ENCODE measurements at regions of chr2 and their contacts with region 1.

Region 1: GRCh38 chr2:134679745-134680144 is 39.1 kb downstream of the TMEM163 start:
- DNase-seq: peak; percentile 58 to 75 (median 60)
- H3K4me3 ChIP-seq: no peak overlapping the region
- H3K4me3 Mint-ChIP-seq: peak overlapping the region; percentile 5 to 83 (median 68)
- H3K27ac ChIP-seq: no peak overlapping the region
- H3K27ac Mint-ChIP-seq: peak overlapping the region; percentile 10 to 71 (median 63)
- H3K4me1 ChIP-seq: peaks cover 52% of the 10 kb centered on the region
- H3K4me1 Mint-ChIP-seq: peaks cover 39 to 69% (median 52%) of the 10 kb centered on the region in 4 donors
- H3K27me3 ChIP-seq: no peaks in the 10 kb centered on the region
- H3K27me3 Mint-ChIP-seq: no peaks in the 10 kb centered on the region

Region 2: DNA sequence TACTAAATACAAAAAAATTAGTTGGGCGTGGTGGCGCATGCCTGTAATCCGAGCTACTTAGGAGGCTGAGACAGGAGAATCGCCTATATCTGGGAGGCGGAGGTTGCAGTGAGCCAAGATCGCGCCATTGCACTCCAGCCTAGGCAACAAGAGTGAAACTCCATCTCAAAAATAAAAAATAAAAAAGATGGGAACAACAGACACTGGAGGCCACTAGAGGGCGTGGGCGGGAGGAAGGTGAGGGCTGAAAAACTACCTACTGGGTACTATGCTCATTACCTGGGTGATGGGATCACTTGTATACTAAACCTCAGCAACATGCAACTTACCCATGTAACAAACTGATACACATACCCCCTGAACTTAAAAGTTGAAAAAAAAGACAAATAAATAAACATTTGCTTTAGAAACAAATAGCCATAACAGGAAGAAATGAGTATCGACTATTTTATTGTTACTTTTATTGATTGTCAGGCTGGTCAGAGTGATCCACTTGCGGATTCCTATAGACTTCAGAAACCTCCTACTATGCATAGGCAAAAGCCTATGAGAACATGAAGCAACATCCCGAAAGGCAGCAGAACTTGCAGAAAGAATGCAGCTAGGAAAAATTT is 22.0 kb before region 1 on chr2:
- CTCF ChIA-PET with region 1: interaction called, 10 read pairs
- POLR2A ChIA-PET with region 1: no interaction called
- intact Hi-C with region 1: no loop called
- DNase-seq: peak in 4 of 5 donors; percentile 30 to 46 (median 44)
- H3K4me3 ChIP-seq: no peak overlapping the region
- H3K4me3 Mint-ChIP-seq: no peak overlapping the region
- H3K27ac ChIP-seq: no peak overlapping the region
- H3K27ac Mint-ChIP-seq: peak overlapping the region in 1 of 7 donors; percentile 37
- H3K4me1 ChIP-seq: no peaks in the 10 kb centered on the region
- H3K4me1 Mint-ChIP-seq: peaks cover 16 to 34% (median 19%) of the 10 kb centered on the region in 4 donors
- H3K27me3 ChIP-seq: no peaks in the 10 kb centered on the region
- H3K27me3 Mint-ChIP-seq: peaks cover 2 to 3% of the 10 kb centered on the region in 2 donors

Region 3: DNA sequence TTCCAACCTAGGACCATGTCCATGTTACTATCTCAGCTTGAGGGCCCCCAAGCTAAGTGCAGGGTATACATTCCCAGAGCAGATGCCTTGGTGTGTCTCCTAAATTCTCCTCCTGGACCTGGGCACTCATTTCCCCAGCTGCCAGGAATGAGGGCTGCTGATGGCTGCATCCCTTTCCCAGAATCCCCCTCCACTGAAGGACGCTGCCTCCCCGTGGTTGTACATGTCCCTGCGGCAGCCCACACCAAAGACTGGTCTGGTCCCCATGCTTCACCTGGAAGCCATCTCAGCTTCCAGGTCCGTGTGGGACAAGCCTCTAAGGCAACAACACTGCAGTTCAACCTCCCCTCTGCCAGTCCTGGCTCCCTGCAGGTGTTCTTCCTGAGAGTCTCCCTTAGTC is 24.4 kb after region 1 on chr2:
- CTCF ChIA-PET with region 1: no interaction called
- POLR2A ChIA-PET with region 1: no interaction called
- intact Hi-C with region 1: no loop called
- DNase-seq: no peak
- H3K4me3 ChIP-seq: no peak overlapping the region
- H3K4me3 Mint-ChIP-seq: peak overlapping the region in 1 of 8 donors; percentile 46
- H3K27ac ChIP-seq: no peak overlapping the region
- H3K27ac Mint-ChIP-seq: no peak overlapping the region
- H3K4me1 ChIP-seq: peaks cover 16% of the 10 kb centered on the region
- H3K4me1 Mint-ChIP-seq: peaks cover 14 to 28% (median 18%) of the 10 kb centered on the region in 4 donors
- H3K27me3 ChIP-seq: peaks cover 13% of the 10 kb centered on the region
- H3K27me3 Mint-ChIP-seq: peaks cover 38 to 41% of the 10 kb centered on the region in 2 donors

Region 4: DNA sequence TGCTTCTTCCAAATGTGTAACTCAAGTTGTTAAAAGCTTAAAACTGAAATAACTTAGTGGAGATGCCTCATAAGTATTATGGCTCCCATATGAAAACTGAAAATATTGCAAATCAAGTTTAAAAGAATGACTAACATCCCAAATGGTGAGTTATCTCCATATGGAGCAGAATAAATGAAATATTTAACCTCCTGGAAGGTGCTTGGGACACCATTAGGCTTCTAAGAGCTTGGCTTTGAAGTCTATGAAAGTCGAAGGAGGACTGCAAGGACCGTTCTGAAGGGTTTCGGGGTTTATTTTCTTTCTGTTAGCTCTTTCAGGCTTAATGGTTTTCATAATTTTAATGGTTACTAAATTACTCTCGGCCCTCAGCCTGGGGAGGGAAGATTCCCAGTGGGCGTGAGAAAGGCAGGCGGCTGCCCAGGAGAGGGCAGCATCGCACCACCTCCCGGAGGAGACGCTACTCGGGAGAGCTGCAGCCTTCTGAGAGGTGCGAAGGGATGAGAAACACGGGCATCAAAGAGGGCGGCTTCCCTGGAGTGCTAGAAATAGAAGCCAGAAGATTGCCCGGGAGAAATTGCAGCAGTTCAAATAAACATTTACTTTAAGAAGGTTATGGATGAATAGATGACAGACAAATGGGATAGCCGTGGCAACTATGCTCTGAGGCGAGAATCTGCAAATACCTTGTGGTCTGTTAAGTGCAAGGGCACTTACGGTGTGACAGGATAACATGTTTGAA is 324.4 kb after region 1 on chr2:
- CTCF ChIA-PET with region 1: no interaction called
- POLR2A ChIA-PET with region 1: no interaction called
- intact Hi-C with region 1: no loop called
- DNase-seq: peak; percentile 48 to 67 (median 62)
- H3K4me3 ChIP-seq: no peak overlapping the region
- H3K4me3 Mint-ChIP-seq: peak overlapping the region in 3 of 8 donors; percentile 8 to 20 (median 17)
- H3K27ac ChIP-seq: no peak overlapping the region
- H3K27ac Mint-ChIP-seq: peak overlapping the region in 1 of 7 donors; percentile 52
- H3K4me1 ChIP-seq: no peaks in the 10 kb centered on the region
- H3K4me1 Mint-ChIP-seq: peaks cover 2 to 6% (median 5%) of the 10 kb centered on the region in 4 donors
- H3K27me3 ChIP-seq: no peaks in the 10 kb centered on the region
- H3K27me3 Mint-ChIP-seq: peaks cover 8 to 20% of the 10 kb centered on the region in 2 donors

Measured in CD4-positive, alpha-beta memory T cell (primary cell).